B cell (primary cell): ENCODE measurements at regions of chr7 and their contacts with region 1.

Region 1: GRCh38 chr7:121547544-121548092 is 151.5 kb upstream of the FAM3C start:
- DNase-seq: peak; percentile 74
- ATAC-seq: peak; percentile 86
- H3K4me3 ChIP-seq: no peak overlapping the region
- H3K4me3 Mint-ChIP-seq: no peak overlapping the region
- H3K27ac ChIP-seq: no peak overlapping the region
- H3K27ac Mint-ChIP-seq: no peak overlapping the region
- H3K4me1 ChIP-seq: no peaks in the 10 kb centered on the region
- H3K4me1 Mint-ChIP-seq: peaks cover 9% of the 10 kb centered on the region
- H3K27me3 ChIP-seq: no peaks in the 10 kb centered on the region
- H3K27me3 Mint-ChIP-seq: peaks cover 3% of the 10 kb centered on the region
- CTCF ChIP-seq: peak; percentile 96

Region 2: DNA sequence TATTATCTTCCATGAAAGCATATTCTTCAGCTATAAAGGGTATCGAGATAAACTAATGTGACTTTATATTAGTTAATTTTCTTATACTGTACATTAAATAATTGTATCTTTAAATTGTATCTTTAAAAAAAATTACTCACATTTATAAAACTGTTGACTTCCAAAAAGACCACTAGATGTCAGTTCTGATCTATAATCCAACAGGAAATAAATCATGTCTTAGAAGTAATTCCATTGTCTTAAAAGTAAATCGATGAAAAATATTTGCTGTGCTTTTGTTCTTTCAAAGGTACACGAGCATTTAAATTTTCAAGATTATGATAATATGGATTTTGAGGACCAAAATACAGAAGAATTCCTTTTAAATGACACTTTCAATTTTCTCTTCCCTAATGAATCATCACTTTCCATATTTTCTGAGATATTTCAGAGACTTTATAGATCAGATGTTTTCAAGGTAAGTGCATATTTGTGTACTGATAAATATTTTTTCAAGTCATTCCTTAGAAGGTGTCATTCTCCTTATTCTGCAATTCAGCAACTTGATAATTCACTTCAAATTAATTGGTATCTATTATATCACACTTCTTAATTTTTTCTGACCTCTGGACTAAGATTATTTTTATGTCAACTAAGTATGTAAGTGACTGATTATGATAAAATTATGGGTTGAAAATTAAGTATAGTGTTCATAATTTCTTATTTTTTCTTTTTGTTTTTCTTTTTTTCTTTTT is 420.6 kb before region 1 on chr7:
- CTCF ChIA-PET with region 1: interaction called, 4 read pairs
- POLR2A ChIA-PET with region 1: no interaction called
- intact Hi-C with region 1: loop called (anchors 1 kb)
- DNase-seq: peak; percentile 51
- ATAC-seq: no peak
- H3K4me3 ChIP-seq: no peak overlapping the region
- H3K4me3 Mint-ChIP-seq: no peak overlapping the region
- H3K27ac ChIP-seq: no peak overlapping the region
- H3K27ac Mint-ChIP-seq: no peak overlapping the region
- H3K4me1 ChIP-seq: peaks cover 0 to 15% of the 10 kb centered on the region in 2 donors
- H3K4me1 Mint-ChIP-seq: peaks cover 9% of the 10 kb centered on the region
- H3K27me3 ChIP-seq: no peaks in the 10 kb centered on the region
- H3K27me3 Mint-ChIP-seq: no peaks in the 10 kb centered on the region
- CTCF ChIP-seq: peak; percentile 74

Region 3: GRCh38 chr7:121360564-121360963 is 187.1 kb before region 1 on chr7:
- CTCF ChIA-PET with region 1: interaction called, 169 read pairs
- POLR2A ChIA-PET with region 1: no interaction called
- intact Hi-C with region 1: no loop called
- DNase-seq: no peak
- ATAC-seq: no peak
- H3K4me3 ChIP-seq: no peak overlapping the region
- H3K4me3 Mint-ChIP-seq: no peak overlapping the region
- H3K27ac ChIP-seq: peak overlapping the region in 1 of 2 donors; percentile 11
- H3K27ac Mint-ChIP-seq: no peak overlapping the region
- H3K4me1 ChIP-seq: no peaks in the 10 kb centered on the region
- H3K4me1 Mint-ChIP-seq: no peaks in the 10 kb centered on the region
- H3K27me3 ChIP-seq: no peaks in the 10 kb centered on the region
- H3K27me3 Mint-ChIP-seq: no peaks in the 10 kb centered on the region
- CTCF ChIP-seq: no peak

Region 4: GRCh38 chr7:121379930-121380329 is 167.7 kb before region 1 on chr7:
- CTCF ChIA-PET with region 1: interaction called, 14 read pairs
- POLR2A ChIA-PET with region 1: no interaction called
- intact Hi-C with region 1: no loop called
- DNase-seq: no peak
- ATAC-seq: no peak
- H3K4me3 ChIP-seq: no peak overlapping the region
- H3K4me3 Mint-ChIP-seq: peak overlapping the region; percentile 58
- H3K27ac ChIP-seq: peak overlapping the region; percentile 42 to 99
- H3K27ac Mint-ChIP-seq: peak overlapping the region; percentile 90
- H3K4me1 ChIP-seq: peaks cover 84 to 87% of the 10 kb centered on the region in 2 donors
- H3K4me1 Mint-ChIP-seq: peaks cover 83% of the 10 kb centered on the region
- H3K27me3 ChIP-seq: no peaks in the 10 kb centered on the region
- H3K27me3 Mint-ChIP-seq: no peaks in the 10 kb centered on the region
- CTCF ChIP-seq: no peak

Region 5: GRCh38 chr7:121582258-121582657 is 34.6 kb after region 1 on chr7:
- CTCF ChIA-PET with region 1: no interaction called
- POLR2A ChIA-PET with region 1: no interaction called
- intact Hi-C with region 1: no loop called
- DNase-seq: no peak
- ATAC-seq: no peak
- H3K4me3 ChIP-seq: no peak overlapping the region
- H3K4me3 Mint-ChIP-seq: no peak overlapping the region
- H3K27ac ChIP-seq: no peak overlapping the region
- H3K27ac Mint-ChIP-seq: no peak overlapping the region
- H3K4me1 ChIP-seq: no peaks in the 10 kb centered on the region
- H3K4me1 Mint-ChIP-seq: no peaks in the 10 kb centered on the region
- H3K27me3 ChIP-seq: peaks cover 0 to 8% (median 2%) of the 10 kb centered on the region in 4 experiments
- H3K27me3 Mint-ChIP-seq: peaks cover 45% of the 10 kb centered on the region
- CTCF ChIP-seq: no peak

Region 6: GRCh38 chr7:121994625-121995410 is 447.2 kb after region 1 on chr7:
- CTCF ChIA-PET with region 1: interaction called, 5 read pairs
- POLR2A ChIA-PET with region 1: no interaction called
- intact Hi-C with region 1: loop called (anchors 10 kb)
- DNase-seq: peak; percentile 53
- ATAC-seq: peak; percentile 74
- H3K4me3 ChIP-seq: no peak overlapping the region
- H3K4me3 Mint-ChIP-seq: no peak overlapping the region
- H3K27ac ChIP-seq: no peak overlapping the region
- H3K27ac Mint-ChIP-seq: no peak overlapping the region
- H3K4me1 ChIP-seq: no peaks in the 10 kb centered on the region
- H3K4me1 Mint-ChIP-seq: no peaks in the 10 kb centered on the region
- H3K27me3 ChIP-seq: no peaks in the 10 kb centered on the region
- H3K27me3 Mint-ChIP-seq: peaks cover 3% of the 10 kb centered on the region
- CTCF ChIP-seq: peak; percentile 91